Calu3 (cell line): ENCODE measurements at regions of chr3 and their contacts with region 1.

Region 1: DNA sequence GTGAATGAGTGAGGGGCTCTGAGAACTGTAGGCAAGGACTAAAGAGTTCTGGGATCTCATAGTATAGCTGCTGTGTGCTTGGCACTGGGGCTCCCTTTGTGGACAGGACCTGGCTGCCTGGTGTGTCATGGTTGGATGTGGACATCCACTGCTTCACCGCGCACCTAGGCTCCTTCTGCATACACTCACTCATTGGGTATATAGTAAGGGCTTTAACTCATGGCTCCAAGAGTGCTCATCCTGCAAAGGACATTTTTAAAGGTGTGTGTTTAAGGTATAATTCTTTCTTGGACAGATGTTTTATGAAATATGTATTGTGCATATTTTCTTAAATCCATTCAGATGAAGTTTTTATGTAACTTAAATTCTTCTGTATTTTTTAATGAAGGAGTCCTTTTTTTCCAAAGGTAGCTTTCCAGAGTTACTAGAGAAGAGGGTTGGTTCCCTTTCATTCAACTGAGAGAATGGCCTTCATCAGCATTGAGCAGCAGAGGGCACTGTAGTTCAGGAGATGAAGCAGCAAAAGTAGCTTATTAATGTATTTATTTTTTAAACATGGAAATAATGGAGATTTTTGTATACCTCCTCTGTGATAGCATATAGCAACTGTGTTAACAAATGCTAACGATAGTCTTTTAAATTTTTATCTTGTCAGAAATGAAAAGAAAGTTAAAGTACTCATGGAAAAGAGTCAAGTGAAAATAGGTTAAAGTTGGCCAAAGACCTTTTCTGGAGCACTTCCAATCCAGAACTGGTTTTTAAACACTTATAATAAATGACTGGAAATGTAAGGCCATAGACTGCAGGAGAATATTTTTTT is 25.2 kb downstream of the OXNAD1 start:
- DNase-seq: peak; percentile 30
- H3K4me3 Mint-ChIP-seq: no peak overlapping the region
- H3K27ac Mint-ChIP-seq: no peak overlapping the region
- H3K4me1 Mint-ChIP-seq: no peaks in the 10 kb centered on the region
- H3K27me3 Mint-ChIP-seq: no peaks in the 10 kb centered on the region
- CTCF ChIP-seq: no peak

Region 2: GRCh38 chr3:16402451-16402850 is 112.2 kb after region 1 on chr3:
- CTCF ChIA-PET with region 1: no interaction called
- intact Hi-C with region 1: no loop called
- DNase-seq: no peak
- H3K4me3 Mint-ChIP-seq: no peak overlapping the region
- H3K27ac Mint-ChIP-seq: no peak overlapping the region
- H3K4me1 Mint-ChIP-seq: peaks cover 10% of the 10 kb centered on the region
- H3K27me3 Mint-ChIP-seq: no peaks in the 10 kb centered on the region
- CTCF ChIP-seq: no peak

Region 3: DNA sequence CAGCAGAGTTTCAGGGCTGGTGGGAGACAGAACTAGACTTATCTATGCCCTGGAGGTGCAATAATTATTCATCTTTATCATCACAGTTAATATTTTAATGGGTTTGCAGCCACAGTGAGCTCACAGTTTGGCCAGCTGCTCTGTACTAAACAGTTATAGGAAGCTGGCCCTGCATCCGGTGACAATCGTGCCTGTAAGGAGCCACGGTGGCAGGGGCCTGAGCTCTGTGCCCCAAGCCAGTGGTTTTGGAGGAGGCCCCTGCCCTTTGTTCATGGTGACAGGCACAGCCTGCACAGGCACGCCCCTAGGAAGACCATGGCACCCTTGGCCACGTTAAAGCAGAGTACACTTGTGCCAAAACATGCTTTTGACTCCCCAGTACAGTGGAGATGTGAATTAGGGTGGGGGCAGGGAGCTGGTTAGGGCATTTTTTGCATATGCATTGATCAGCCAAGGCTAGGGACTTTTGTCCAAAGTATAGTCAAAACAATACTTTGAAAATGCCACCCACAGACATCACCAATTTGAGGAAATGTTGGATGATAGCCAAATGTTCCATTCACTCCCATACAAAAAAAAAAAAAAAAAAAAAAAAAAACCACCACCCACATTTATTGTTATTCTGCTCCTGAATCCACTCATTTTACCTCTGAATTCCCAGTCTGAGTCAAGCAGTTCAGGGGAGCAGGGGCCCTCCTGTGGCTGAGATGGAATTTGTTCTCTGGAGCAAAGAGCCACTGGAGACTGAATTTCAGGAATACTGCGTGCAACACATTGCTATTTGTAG is 226.7 kb after region 1 on chr3:
- CTCF ChIA-PET with region 1: interaction called, 15 read pairs
- intact Hi-C with region 1: loop called (anchors 1 kb)
- DNase-seq: peak; percentile 12
- H3K4me3 Mint-ChIP-seq: no peak overlapping the region
- H3K27ac Mint-ChIP-seq: no peak overlapping the region
- H3K4me1 Mint-ChIP-seq: no peaks in the 10 kb centered on the region
- H3K27me3 Mint-ChIP-seq: peaks cover 99% of the 10 kb centered on the region
- CTCF ChIP-seq: no peak